Tibial artery (tissue), 4 donors: ENCODE measurements at regions of chr16 and their contacts with region 1.

Region 1: GRCh38 chr16:21222495-21223337 is 10.8 kb upstream of the ANKS4B start:
- DNase-seq: no peak
- H3K4me3 ChIP-seq: no peak overlapping the region
- H3K27ac ChIP-seq: no peak overlapping the region
- H3K4me1 ChIP-seq: no peaks in the 10 kb centered on the region
- H3K27me3 ChIP-seq: peaks cover 0 to 18% of the 10 kb centered on the region in 2 donors
- CTCF ChIP-seq: no peak

Region 2: GRCh38 chr16:21194771-21195301 is 27.9 kb before region 1 on chr16:
- intact Hi-C with region 1: loop called (anchors 2 kb)
- DNase-seq: no peak
- H3K4me3 ChIP-seq: no peak overlapping the region
- H3K27ac ChIP-seq: no peak overlapping the region
- H3K4me1 ChIP-seq: no peaks in the 10 kb centered on the region
- H3K27me3 ChIP-seq: peaks cover 0 to 7% of the 10 kb centered on the region in 2 donors
- CTCF ChIP-seq: no peak